Activated CD4-positive, alpha-beta memory T cell treated with anti-CD3 and anti-CD28 coated beads, Interleukin-2, amount 10 ng/mL, durations not matched to agents 7 days and 5 days (primary cell): ENCODE measurements at regions of chr11 and their contacts with region 1.

Region 1: GRCh38 chr11:123407130-123407995 is 22.7 kb upstream of the GRAMD1B start:
- DNase-seq: peak; percentile 73
- H3K4me3 Mint-ChIP-seq: peak overlapping the region; percentile 70
- H3K27ac Mint-ChIP-seq: no peak overlapping the region
- H3K4me1 Mint-ChIP-seq: peaks cover 45% of the 10 kb centered on the region
- H3K27me3 Mint-ChIP-seq: no peaks in the 10 kb centered on the region

Region 2: GRCh38 chr11:123321636-123322035 is 85.7 kb before region 1 on chr11:
- CTCF ChIA-PET with region 1: no interaction called
- POLR2A ChIA-PET with region 1: no interaction called
- DNase-seq: no peak
- H3K4me3 Mint-ChIP-seq: no peak overlapping the region
- H3K27ac Mint-ChIP-seq: no peak overlapping the region
- H3K4me1 Mint-ChIP-seq: no peaks in the 10 kb centered on the region
- H3K27me3 Mint-ChIP-seq: peaks cover 23% of the 10 kb centered on the region

Region 3: DNA sequence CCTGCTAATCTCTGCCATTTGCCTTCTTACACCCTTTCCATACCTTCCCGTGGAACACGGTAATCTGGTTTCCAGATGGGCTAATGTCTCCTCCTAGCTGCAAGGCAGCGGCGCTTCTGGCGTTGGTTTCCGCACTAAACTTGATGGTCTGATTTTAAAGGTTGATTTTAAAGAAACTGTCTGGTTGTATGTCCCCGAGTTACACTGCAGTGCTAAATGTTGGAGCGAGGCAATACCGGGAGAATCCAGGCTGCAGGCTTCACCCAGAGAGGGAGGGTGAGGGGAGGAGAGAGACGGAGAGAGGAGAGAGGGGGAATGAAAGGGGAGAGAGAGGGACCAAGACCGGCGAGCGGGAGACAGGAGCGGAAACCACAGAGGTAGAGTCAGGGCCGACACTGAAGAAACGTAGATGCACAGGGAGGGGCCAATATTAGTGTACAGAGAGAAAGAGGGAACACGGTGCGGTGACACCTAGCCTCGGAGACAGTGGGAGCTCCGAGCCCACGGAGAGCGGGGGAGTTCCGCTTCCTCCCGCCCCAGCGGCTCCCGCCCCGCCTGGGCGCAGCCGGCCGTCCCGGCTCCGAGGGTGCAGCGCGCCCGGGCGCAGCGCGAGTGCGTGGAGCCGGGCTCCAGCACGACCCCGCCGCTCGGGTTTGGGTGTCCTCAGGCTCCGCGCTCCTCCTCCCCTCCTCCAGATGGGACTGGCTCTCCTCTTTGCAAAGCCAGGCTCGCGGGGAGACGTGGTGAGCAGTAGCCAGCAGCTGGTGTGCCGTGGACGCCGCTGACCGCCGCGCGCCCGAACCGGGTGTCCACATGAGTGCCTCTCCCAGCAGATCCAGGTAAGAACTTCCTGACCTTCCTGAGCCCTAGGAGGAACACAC is 49.2 kb before region 1 on chr11:
- CTCF ChIA-PET with region 1: interaction called, 39 read pairs
- POLR2A ChIA-PET with region 1: interaction called, 3 read pairs
- DNase-seq: peak; percentile 66
- H3K4me3 Mint-ChIP-seq: peak overlapping the region; percentile 87
- H3K27ac Mint-ChIP-seq: peak overlapping the region; percentile 66
- H3K4me1 Mint-ChIP-seq: peaks cover 58% of the 10 kb centered on the region
- H3K27me3 Mint-ChIP-seq: peaks cover 5% of the 10 kb centered on the region

Region 4: DNA sequence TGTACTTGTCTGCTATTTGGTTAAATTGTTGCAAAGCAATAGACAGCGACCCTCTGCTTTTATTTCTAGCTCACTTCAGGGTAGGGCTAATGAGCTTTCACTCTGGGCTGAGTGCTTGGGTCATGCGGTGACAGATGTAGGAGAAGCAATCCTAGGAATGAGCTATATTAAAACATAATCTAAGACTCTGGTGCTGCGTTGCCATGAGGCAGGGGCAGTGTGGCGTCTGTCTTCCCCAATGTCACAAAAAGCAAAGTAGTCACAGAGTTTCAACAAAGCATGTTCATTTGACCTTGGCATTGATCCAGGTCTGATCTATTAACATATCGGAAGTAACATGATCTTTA is 32.8 kb before region 1 on chr11:
- CTCF ChIA-PET with region 1: no interaction called
- POLR2A ChIA-PET with region 1: no interaction called
- DNase-seq: no peak
- H3K4me3 Mint-ChIP-seq: no peak overlapping the region
- H3K27ac Mint-ChIP-seq: no peak overlapping the region
- H3K4me1 Mint-ChIP-seq: peaks cover 49% of the 10 kb centered on the region
- H3K27me3 Mint-ChIP-seq: no peaks in the 10 kb centered on the region

Region 5: DNA sequence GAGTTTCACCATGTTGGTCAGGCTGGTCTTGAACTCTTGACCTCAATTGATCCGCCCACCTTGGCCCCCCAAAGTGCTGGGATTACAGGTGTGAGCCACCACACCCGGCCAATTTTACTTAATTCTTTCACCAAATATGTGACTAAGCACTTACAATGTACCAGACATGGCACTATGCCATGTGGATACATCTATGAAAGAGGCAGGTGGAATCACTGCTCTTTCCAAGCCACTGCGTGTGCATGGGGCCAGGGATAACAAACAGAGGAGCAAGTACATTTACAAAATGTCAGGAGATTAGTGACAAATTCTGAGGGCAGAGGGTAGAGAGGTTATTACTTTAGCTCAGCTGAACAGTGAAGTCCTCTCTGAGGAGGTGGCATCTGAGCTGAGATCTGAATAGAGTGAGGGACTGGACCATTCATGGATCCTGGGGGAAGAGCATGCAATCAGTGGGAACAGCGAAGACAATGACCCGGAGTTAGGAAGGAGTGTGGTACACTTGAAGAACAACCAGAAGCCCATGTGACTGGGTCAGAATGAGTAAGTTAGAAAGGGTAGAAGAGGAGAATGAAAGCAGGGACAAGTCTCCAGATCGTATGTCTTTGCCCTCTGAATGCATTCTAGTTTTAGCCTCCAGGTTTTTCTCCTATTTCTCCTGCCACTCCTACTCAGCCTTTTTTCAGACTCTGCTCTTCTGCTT is 15.6 kb before region 1 on chr11:
- CTCF ChIA-PET with region 1: interaction called, 24 read pairs
- POLR2A ChIA-PET with region 1: interaction called, 5 read pairs
- DNase-seq: no peak
- H3K4me3 Mint-ChIP-seq: peak overlapping the region; percentile 3
- H3K27ac Mint-ChIP-seq: peak overlapping the region; percentile 32
- H3K4me1 Mint-ChIP-seq: peaks cover 44% of the 10 kb centered on the region
- H3K27me3 Mint-ChIP-seq: peaks cover 3% of the 10 kb centered on the region

Region 6: GRCh38 chr11:123438191-123438627 is 30.8 kb after region 1 on chr11:
- CTCF ChIA-PET with region 1: interaction called, 60 read pairs
- POLR2A ChIA-PET with region 1: interaction called, 9 read pairs
- DNase-seq: no peak
- H3K4me3 Mint-ChIP-seq: peak overlapping the region; percentile 45
- H3K27ac Mint-ChIP-seq: peak overlapping the region; percentile 86
- H3K4me1 Mint-ChIP-seq: peaks cover 93% of the 10 kb centered on the region
- H3K27me3 Mint-ChIP-seq: no peaks in the 10 kb centered on the region

Region 7: DNA sequence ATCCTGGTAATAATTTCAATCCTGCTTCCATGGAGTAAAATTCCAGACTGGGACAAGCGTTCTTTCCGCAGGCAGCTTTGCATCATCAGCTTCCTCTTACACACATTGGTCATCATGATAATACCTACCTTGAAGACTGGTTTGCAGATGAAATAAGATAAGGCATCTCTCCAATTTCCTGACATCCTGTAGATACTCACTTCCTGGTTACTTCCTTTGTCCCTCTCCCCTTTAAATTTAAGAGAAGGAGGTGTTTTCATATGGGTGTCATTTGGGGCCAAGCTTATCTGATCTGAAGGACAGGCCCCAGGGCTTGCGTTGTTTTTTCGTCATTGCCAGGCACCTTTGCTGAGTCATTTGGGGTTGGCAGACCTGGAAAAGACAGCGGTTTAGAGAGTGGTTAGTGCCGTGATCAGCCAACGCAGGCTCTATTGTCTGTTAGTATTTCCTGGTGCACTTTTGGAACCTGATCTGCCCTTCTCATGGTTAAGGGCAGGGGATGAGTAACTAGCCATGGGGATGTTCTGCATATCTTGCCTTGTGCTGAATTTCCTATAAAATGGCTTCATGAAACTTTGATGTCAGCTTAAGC is 46.8 kb after region 1 on chr11:
- CTCF ChIA-PET with region 1: interaction called, 11 read pairs
- POLR2A ChIA-PET with region 1: interaction called, 4 read pairs
- DNase-seq: peak; percentile 88
- H3K4me3 Mint-ChIP-seq: peak overlapping the region; percentile 59
- H3K27ac Mint-ChIP-seq: peak overlapping the region; percentile 87
- H3K4me1 Mint-ChIP-seq: peaks cover 94% of the 10 kb centered on the region
- H3K27me3 Mint-ChIP-seq: no peaks in the 10 kb centered on the region

Region 8: GRCh38 chr11:123494195-123495050 is 87.1 kb after region 1 on chr11:
- CTCF ChIA-PET with region 1: interaction called, 10 read pairs
- POLR2A ChIA-PET with region 1: no interaction called
- DNase-seq: no peak
- H3K4me3 Mint-ChIP-seq: no peak overlapping the region
- H3K27ac Mint-ChIP-seq: no peak overlapping the region
- H3K4me1 Mint-ChIP-seq: peaks cover 16% of the 10 kb centered on the region
- H3K27me3 Mint-ChIP-seq: no peaks in the 10 kb centered on the region